Activated B cell treated with CpG ODN at 0.5 μM for 24 hours (primary cell): ENCODE measurements at regions of chr22 and their contacts with region 1.

Region 1: DNA sequence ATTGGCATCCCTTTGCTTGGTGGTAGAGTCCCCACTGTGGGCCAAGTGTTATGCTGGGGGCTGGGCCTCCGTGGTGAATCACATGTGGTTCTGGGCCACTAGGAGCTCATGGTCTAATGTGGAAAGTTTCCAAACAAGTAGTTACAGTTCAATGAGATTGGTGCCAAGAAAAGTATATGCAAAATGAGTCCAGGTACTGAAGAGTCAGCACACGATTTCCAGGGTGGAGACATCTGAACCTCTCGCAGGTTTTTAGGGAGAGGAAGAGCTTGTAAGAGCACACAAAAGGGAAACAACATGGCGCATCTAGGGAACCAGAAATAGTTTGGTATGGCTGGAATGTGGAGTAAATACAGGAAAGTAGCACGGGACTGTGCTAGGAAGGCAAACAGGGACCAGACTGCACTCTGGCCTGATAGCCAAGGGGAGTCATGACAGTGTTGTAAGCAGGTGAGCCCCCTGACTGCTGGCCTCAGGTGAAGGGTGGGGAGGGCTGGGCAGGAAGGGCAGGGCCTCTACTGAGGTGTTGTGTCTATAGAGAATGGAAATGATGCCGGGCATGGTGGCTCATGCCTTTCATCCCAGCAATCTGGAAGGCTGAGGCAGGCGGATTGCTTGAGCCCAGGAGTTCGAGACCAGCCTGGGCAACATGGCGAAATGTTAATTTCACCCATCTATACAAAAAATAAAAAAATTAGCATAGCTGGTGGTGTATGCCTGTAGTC is 12.6 kb downstream of the POLR2F start:
- DNase-seq: no peak
- ATAC-seq: no peak
- H3K4me3 Mint-ChIP-seq: no peak overlapping the region
- H3K27ac Mint-ChIP-seq: no peak overlapping the region
- H3K4me1 Mint-ChIP-seq: no peaks in the 10 kb centered on the region
- H3K27me3 Mint-ChIP-seq: no peaks in the 10 kb centered on the region
- CTCF ChIP-seq: no peak

Region 2: GRCh38 chr22:37905534-37906363 is 60.4 kb before region 1 on chr22 and contains the start of gene MICALL1:
- CTCF ChIA-PET with region 1: interaction called, 8 read pairs
- POLR2A ChIA-PET with region 1: no interaction called
- intact Hi-C with region 1: loop called (anchors 1 kb)
- DNase-seq: peak; percentile 81
- ATAC-seq: peak; percentile 90
- H3K4me3 Mint-ChIP-seq: peak within 1 kb of the TSS; percentile 81
- H3K27ac Mint-ChIP-seq: peak within 1 kb of the TSS; percentile 85
- H3K4me1 Mint-ChIP-seq: peaks cover 22% of the 10 kb centered on the region
- H3K27me3 Mint-ChIP-seq: no peaks in the 10 kb centered on the region
- CTCF ChIP-seq: no peak
- total RNA-seq, gene MICALL1: 20.8 and 27.6 TPM in 2 replicates